GM12878 (cell line): ENCODE measurements at regions of chr10 and their contacts with region 1.

Region 1: GRCh38 chr10:1715836-1716245 is 21.5 kb downstream of the ADARB2 start:
- DNase-seq: peak; percentile 33
- ATAC-seq: peak; percentile 95
- H3K4me3 ChIP-seq: no peak overlapping the region; the same call in 1 of the 2 replicates
- H3K27ac ChIP-seq: no peak overlapping the region
- H3K4me1 ChIP-seq: peaks cover 12% of the 10 kb centered on the region
- H3K27me3 ChIP-seq: no peaks in the 10 kb centered on the region
- CTCF ChIP-seq: peak; percentile 76 to 89 (median 78)
- EP300 ChIP-seq: no peak
- POLR2A ChIP-seq: no peak
- RAD21 ChIP-seq: peak; percentile 46

Region 2: DNA sequence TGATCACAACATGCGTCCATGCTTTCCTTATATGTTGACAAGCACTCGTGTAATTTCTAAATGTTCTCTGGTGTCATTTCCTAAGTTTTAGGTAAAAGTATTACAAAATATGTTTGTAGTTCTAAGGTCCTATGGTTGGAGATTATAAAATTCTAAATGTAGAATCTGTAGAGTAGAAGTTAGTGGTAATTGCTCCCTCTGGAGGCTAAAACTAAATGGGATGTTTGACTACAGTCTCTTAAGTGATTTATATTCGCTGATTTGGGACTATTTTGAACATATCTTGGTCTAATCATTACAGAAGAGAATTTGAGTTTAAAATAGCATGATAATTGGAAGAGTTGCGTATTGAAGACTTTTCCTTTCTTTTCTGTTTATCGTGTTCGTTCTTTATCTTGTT is 1506.5 kb before region 1 on chr10:
- CTCF ChIA-PET with region 1: no interaction called
- POLR2A ChIA-PET with region 1: no interaction called
- RAD21 ChIA-PET with region 1: no interaction called
- SMC1A ChIA-PET with region 1: no interaction called
- in situ Hi-C with region 1: no loop called
- intact Hi-C with region 1: no loop called
- DNase-seq: no peak
- ATAC-seq: no peak
- H3K4me3 ChIP-seq: no peak overlapping the region
- H3K27ac ChIP-seq: no peak overlapping the region
- H3K4me1 ChIP-seq: no peaks in the 10 kb centered on the region
- H3K27me3 ChIP-seq: no peaks in the 10 kb centered on the region
- CTCF ChIP-seq: no peak
- EP300 ChIP-seq: no peak
- POLR2A ChIP-seq: no peak
- RAD21 ChIP-seq: no peak

Region 3: DNA sequence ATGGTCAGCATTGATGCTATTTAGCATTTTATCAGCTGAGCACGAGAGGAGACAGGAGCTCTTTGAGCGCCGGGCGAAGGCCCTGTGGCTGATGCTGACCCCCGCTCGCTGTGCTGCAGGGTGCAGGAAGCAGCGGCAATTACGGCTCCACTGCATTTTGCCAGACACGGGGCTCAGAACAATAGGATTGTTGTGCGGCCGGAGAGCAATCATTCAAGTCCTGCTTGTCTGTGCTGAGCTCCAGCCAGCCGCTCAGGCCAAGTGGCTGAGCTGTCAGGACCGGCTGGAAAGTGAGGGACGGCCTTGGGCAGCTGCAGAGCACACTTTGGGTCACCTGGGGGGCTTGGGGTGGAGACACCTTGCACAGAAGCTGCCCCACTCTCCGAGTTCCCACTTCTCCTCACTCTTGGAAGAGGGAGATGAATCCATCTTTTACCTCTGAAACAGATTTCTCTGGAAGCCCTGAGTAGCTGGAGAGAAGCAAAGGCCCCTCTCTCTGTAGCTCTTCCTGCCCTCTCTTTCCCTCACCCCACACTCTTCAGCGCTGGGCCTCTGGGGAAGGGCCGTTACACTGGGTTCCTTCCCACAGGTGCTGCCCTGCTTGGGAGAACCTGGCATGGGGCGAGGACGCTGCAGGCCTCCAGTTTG is 38.8 kb after region 1 on chr10:
- CTCF ChIA-PET with region 1: interaction called, 32 read pairs
- POLR2A ChIA-PET with region 1: interaction called, 5 read pairs
- RAD21 ChIA-PET with region 1: interaction called, 8 read pairs
- SMC1A ChIA-PET with region 1: interaction called, 12 read pairs
- in situ Hi-C with region 1: no loop called
- intact Hi-C with region 1: no loop called
- DNase-seq: no peak
- ATAC-seq: no peak
- H3K4me3 ChIP-seq: no peak overlapping the region
- H3K27ac ChIP-seq: no peak overlapping the region
- H3K4me1 ChIP-seq: no peaks in the 10 kb centered on the region
- H3K27me3 ChIP-seq: peaks cover 0 to 4% of the 10 kb centered on the region in 2 experiments; a peak in 2 of 4 replicates
- CTCF ChIP-seq: no peak
- EP300 ChIP-seq: no peak
- POLR2A ChIP-seq: no peak
- RAD21 ChIP-seq: no peak

Region 4: DNA sequence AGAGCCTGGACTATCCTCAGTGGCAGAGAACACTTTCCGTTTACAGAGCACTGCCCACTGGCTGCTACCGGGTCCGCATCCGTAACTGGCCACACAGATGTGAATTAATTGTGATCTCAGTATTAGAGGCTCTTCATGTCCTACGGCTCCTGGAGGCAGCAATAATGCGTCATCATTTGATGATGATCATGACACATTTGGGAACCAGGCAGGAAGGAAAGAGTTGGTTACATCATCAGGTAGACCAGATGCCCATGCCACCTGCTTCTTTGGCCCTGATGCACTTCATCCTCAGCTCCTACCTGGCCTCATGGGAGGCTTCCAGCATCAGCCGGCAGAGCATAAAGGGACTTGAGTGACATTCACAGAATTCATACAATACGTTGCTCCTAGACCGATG is 74.4 kb after region 1 on chr10:
- CTCF ChIA-PET with region 1: no interaction called
- POLR2A ChIA-PET with region 1: no interaction called
- RAD21 ChIA-PET with region 1: no interaction called
- SMC1A ChIA-PET with region 1: no interaction called
- in situ Hi-C with region 1: no loop called
- intact Hi-C with region 1: no loop called
- DNase-seq: no peak
- ATAC-seq: no peak
- H3K4me3 ChIP-seq: no peak overlapping the region
- H3K27ac ChIP-seq: no peak overlapping the region
- H3K4me1 ChIP-seq: no peaks in the 10 kb centered on the region
- H3K27me3 ChIP-seq: no peaks in the 10 kb centered on the region
- CTCF ChIP-seq: no peak
- EP300 ChIP-seq: no peak
- POLR2A ChIP-seq: no peak
- RAD21 ChIP-seq: no peak